ENCODE measurements at regions of chr1 and their contacts with region 1.

Region 1: DNA sequence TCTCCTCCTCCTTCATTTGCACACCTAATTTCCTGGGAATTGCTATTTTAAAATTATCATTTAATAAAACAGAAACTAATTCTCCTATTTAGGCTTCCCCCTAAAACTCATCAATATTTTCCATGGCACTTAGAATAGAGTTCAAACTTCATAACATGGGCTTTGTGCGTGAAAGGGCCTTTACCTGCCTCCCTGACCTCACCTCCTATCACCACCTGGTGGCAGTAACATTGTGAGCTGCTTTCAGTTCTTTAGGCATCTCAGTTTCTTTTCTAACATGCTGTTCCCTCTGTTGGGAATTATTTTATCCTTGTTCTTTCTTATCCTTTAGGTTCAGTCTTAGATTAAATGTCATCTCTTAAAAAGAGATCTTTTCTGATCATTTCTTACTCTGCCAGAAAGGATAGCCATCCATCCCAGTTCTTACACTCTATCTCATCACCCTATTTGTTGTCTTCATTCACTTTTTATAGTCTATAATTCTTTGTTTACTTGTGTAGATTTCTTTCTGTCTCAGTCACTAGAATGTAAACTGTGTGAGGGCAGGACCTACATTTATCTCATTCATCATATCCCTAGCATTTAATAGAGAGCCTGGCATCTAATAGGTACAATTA is 133.8 kb upstream of the KIAA1614 start:
- DNase-seq: peak; percentile 23 to 40 (median 31)
- ATAC-seq: peak; percentile 82
- H3K4me3 ChIP-seq: no peak overlapping the region
- H3K27ac ChIP-seq: no peak overlapping the region
- H3K4me1 ChIP-seq: no peaks in the 10 kb centered on the region
- H3K27me3 ChIP-seq: no peaks in the 10 kb centered on the region
- CTCF ChIP-seq: peak; percentile 46 to 55 (median 46); a peak in 4 of 6 replicates
- EP300 ChIP-seq: no peak
- POLR2A ChIP-seq: no peak
- RAD21 ChIP-seq: peak in 1 of 2 experiments; percentile 55; a peak in 2 of 4 replicates

Region 2: GRCh38 chr1:180863158-180863775 is 84.4 kb after region 1 on chr1:
- CTCF ChIA-PET with region 1: no interaction called
- POLR2A ChIA-PET with region 1: no interaction called
- in situ Hi-C with region 1: no loop called
- intact Hi-C with region 1: loop called (anchors 5 kb)
- DNase-seq: peak; percentile 30 to 74 (median 41)
- ATAC-seq: peak; percentile 80
- H3K4me3 ChIP-seq: no peak overlapping the region
- H3K27ac ChIP-seq: no peak overlapping the region
- H3K4me1 ChIP-seq: no peaks in the 10 kb centered on the region; a peak in 1 of 5 replicates
- H3K27me3 ChIP-seq: no peaks in the 10 kb centered on the region
- CTCF ChIP-seq: peak; percentile 55 to 94 (median 60); a peak in 5 of 6 replicates
- EP300 ChIP-seq: no peak
- POLR2A ChIP-seq: no peak
- RAD21 ChIP-seq: peak; percentile 98 to 99

Measured in K562 (cell line).